ENCODE measurements at regions of chr7 and their contacts with region 1.

Region 1: GRCh38 chr7:106959753-106960152 is 84.8 kb upstream of the PRKAR2B start:
- DNase-seq: no peak
- H3K4me3 ChIP-seq: no peak overlapping the region
- H3K27ac ChIP-seq: no peak overlapping the region
- H3K4me1 ChIP-seq: no peaks in the 10 kb centered on the region
- H3K27me3 ChIP-seq: no peaks in the 10 kb centered on the region
- CTCF ChIP-seq: no peak
- EP300 ChIP-seq: no peak
- POLR2A ChIP-seq: no peak

Region 2: GRCh38 chr7:106887421-106887820 is 72.3 kb before region 1 on chr7:
- intact Hi-C with region 1: no loop called
- DNase-seq: no peak
- H3K4me3 ChIP-seq: no peak overlapping the region
- H3K27ac ChIP-seq: peak overlapping the region in 1 of 5 donors; percentile 28
- H3K4me1 ChIP-seq: no peaks in the 10 kb centered on the region
- H3K27me3 ChIP-seq: no peaks in the 10 kb centered on the region
- CTCF ChIP-seq: no peak
- EP300 ChIP-seq: no peak
- POLR2A ChIP-seq: no peak

Region 3: GRCh38 chr7:106915873-106916272 is 43.9 kb before region 1 on chr7:
- intact Hi-C with region 1: no loop called
- DNase-seq: no peak
- H3K4me3 ChIP-seq: no peak overlapping the region
- H3K27ac ChIP-seq: no peak overlapping the region
- H3K4me1 ChIP-seq: no peaks in the 10 kb centered on the region
- H3K27me3 ChIP-seq: no peaks in the 10 kb centered on the region
- CTCF ChIP-seq: no peak
- EP300 ChIP-seq: no peak
- POLR2A ChIP-seq: no peak

Region 4: DNA sequence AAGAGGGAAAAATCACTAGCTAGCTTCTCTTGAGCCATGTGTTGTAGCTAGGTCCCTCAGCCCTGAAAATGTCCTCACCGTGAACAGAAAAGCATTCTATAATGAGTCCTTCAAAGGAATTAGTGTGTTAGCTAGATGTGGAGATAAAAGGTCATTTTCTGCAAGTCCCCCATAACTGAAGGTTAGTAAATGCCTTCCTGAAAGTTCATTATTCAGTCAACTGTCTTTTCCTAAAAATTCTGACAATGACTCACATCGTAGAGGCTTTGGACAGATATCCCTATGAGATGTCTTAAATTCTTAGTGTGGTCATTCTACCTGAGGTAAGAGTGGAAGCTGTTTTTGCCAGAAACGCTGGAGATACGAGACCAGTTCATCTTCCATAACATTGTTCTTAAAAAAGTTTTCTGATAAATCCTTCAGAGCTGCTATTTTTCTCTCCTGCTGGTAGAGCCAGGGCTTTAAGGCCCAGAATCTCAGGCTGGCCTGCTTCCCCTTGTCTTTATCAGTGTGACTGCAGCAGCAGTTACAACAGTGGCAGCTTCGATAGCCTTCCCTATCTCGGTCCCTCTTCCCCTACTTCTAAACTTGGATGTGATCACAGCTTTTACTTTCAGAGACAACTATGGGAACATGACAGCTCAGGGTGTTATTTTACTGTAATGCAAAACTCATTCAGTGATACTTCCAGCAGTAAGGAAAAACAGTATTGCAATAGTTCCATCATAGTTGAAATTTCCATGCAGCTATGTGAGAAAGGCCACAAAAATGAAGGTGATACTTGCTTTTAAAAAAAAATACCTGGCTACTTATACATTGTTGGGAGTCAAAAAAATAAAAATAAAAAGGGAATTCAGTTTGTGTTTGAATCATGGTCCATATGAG is 47.5 kb after region 1 on chr7:
- intact Hi-C with region 1: no loop called
- DNase-seq: peak in 1 of 2 donors; percentile 20
- H3K4me3 ChIP-seq: no peak overlapping the region
- H3K27ac ChIP-seq: no peak overlapping the region
- H3K4me1 ChIP-seq: no peaks in the 10 kb centered on the region
- H3K27me3 ChIP-seq: no peaks in the 10 kb centered on the region
- CTCF ChIP-seq: no peak
- EP300 ChIP-seq: no peak
- POLR2A ChIP-seq: no peak

Region 5: DNA sequence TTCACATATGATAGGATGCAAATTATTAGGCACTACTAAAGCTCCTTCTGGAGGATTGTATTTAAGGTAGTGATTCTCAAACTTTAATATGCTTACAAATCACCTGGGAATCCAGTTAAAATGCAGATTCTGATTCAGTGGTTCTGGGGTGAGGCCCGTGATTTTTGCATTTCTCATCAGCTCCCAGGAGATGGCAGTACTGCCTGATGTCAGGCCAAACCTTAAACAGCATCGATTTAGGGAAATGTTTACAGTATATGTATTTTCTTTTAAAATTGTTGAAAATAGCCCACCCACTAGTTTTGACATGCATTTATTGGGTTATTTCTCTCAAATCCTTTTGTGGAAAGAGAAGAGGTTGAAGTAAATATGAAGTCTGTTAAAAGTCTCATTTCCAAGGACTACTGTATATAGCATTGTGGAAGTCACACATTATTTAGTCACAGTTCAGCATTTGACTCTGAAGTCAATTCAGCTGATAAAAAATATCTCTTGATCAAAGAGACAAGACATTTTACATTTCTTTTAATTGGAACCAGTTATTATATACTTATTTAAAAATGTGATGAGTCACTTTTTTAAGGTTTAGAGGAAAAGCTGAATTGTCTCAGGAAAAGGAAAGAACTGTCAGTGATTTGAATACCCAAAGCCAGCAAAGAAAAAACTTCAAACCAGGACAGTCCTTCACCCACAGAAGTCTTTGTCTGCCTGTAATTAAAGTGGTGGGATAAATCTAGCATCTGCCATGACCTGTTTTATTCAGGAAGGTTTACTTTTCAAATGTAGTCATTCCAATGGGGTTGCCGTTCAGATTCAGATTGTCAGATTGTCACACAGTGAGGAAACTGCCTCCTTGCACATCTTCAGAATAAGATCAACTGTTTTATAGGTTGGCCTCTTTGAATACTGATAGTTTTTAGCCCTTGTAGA is 188.0 kb after region 1 on chr7:
- intact Hi-C with region 1: loop called (anchors 10 kb)
- DNase-seq: peak in 1 of 2 donors; percentile 64
- H3K4me3 ChIP-seq: no peak overlapping the region
- H3K27ac ChIP-seq: no peak overlapping the region
- H3K4me1 ChIP-seq: peaks cover 0 to 11% (median 7%) of the 10 kb centered on the region in 4 donors
- H3K27me3 ChIP-seq: no peaks in the 10 kb centered on the region
- CTCF ChIP-seq: peak in 5 of 7 experiments; percentile 37 to 55 (median 42)
- EP300 ChIP-seq: no peak
- POLR2A ChIP-seq: no peak